Posterior vena cava (tissue), 2 donors: ENCODE measurements at regions of chr2 and their contacts with region 1.

Region 1: GRCh38 chr2:222993920-222994650 is 57.9 kb upstream of the KCNE4 start:
- DNase-seq: peak; percentile 92

Region 2: DNA sequence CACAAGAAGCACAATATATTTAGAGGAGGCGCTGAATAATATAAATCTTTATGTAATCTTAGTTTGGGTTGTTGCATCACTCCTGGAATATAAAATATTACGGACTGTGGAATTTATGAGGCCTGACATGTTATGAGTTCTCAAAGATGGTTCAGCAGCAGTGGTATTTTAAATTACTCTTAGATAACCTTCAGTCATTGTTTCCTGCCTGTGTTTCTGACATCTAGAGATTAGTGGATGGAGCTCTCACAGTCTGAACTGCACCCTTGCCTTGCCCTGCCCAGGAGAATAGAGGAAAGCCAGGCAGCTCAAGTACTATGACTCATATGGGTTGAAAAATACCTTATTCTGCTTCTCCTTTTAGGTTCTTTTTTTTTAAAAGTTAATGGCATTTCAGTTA is 63.2 kb before region 1 on chr2:
- intact Hi-C with region 1: no loop called
- DNase-seq: no peak

Region 3: GRCh38 chr2:223047260-223047761 is 53.2 kb after region 1 on chr2:
- intact Hi-C with region 1: loop called in 1 of 2 experiments (anchors 5 kb)
- DNase-seq: no peak

Region 4: DNA sequence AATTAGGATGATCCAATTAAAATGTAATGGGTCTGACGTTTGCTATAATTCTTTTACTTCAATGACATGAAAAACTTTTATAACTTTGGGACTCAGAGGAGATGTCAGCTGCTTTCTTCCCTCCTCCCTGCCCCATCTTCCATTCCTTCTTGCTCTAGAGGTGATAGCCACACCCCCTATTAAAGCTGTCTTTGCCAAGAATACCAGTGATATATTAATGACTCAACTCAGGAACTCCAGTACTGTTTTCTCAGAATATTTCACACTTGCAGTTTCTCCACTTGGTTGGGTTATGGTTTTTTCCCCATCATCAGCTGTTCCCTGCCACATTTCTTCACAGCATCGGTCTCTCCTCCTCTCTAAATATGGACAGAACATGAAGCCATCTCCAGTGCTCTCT is 241.9 kb after region 1 on chr2:
- intact Hi-C with region 1: no loop called
- DNase-seq: no peak